ENCODE measurements at regions of chr7 and their contacts with region 1.

Region 1: DNA sequence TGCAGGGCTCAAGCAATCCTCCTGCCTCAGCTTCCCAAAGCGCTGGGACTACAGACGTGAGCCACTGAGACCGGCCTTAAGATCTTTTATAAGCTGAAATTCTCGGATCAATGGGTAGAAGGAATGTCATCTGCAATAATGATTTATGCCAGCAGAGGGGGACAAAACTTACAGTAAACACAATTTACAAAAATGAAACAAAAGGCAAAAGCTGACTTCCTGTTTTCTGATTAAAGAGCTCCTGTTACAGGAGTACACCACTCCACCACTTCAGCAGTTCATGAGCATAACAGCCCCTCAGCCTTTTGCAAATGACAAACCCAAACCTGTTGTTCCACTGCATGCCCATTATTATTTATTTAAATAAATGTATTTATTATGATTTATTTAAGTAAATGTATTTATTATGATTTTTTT is 88.5 kb upstream of the ATP6V0A4 start:
- DNase-seq: no peak
- H3K4me3 ChIP-seq: no peak overlapping the region
- H3K27ac ChIP-seq: no peak overlapping the region
- H3K4me1 ChIP-seq: peaks cover 18% of the 10 kb centered on the region
- H3K27me3 ChIP-seq: no peaks in the 10 kb centered on the region
- CTCF ChIP-seq: peak; percentile 70

Region 2: GRCh38 chr7:138981332-138982203 is 95.1 kb after region 1 on chr7 and contains the start of gene KIAA1549:
- intact Hi-C with region 1: loop called (anchors 10 kb)
- DNase-seq: peak; percentile 67
- H3K4me3 ChIP-seq: peak within 1 kb of the TSS; percentile 77
- H3K27ac ChIP-seq: peak within 1 kb of the TSS; percentile 60
- H3K4me1 ChIP-seq: peaks cover 18% of the 10 kb centered on the region
- H3K27me3 ChIP-seq: no peaks in the 10 kb centered on the region
- CTCF ChIP-seq: peak; percentile 13
- total RNA-seq, gene KIAA1549: 2.1 TPM

Region 3: GRCh38 chr7:139075031-139075652 is 188.6 kb after region 1 on chr7:
- intact Hi-C with region 1: loop called (anchors 10 kb)
- DNase-seq: peak; percentile 50
- H3K4me3 ChIP-seq: no peak overlapping the region
- H3K27ac ChIP-seq: peak overlapping the region; percentile 51
- H3K4me1 ChIP-seq: peaks cover 17% of the 10 kb centered on the region
- H3K27me3 ChIP-seq: no peaks in the 10 kb centered on the region
- CTCF ChIP-seq: peak; percentile 90

Region 4: GRCh38 chr7:139271718-139272628 is 385.5 kb after region 1 on chr7:
- intact Hi-C with region 1: no loop called
- DNase-seq: no peak
- H3K4me3 ChIP-seq: peak overlapping the region; percentile 23
- H3K27ac ChIP-seq: peak overlapping the region; percentile 75
- H3K4me1 ChIP-seq: peaks cover 13% of the 10 kb centered on the region
- H3K27me3 ChIP-seq: no peaks in the 10 kb centered on the region
- CTCF ChIP-seq: no peak

Measured in left ventricle myocardium inferior (tissue), 1 donor.